Pancreas (tissue), 10 donors: ENCODE measurements at regions of chr2 and their contacts with region 1.

Region 1: DNA sequence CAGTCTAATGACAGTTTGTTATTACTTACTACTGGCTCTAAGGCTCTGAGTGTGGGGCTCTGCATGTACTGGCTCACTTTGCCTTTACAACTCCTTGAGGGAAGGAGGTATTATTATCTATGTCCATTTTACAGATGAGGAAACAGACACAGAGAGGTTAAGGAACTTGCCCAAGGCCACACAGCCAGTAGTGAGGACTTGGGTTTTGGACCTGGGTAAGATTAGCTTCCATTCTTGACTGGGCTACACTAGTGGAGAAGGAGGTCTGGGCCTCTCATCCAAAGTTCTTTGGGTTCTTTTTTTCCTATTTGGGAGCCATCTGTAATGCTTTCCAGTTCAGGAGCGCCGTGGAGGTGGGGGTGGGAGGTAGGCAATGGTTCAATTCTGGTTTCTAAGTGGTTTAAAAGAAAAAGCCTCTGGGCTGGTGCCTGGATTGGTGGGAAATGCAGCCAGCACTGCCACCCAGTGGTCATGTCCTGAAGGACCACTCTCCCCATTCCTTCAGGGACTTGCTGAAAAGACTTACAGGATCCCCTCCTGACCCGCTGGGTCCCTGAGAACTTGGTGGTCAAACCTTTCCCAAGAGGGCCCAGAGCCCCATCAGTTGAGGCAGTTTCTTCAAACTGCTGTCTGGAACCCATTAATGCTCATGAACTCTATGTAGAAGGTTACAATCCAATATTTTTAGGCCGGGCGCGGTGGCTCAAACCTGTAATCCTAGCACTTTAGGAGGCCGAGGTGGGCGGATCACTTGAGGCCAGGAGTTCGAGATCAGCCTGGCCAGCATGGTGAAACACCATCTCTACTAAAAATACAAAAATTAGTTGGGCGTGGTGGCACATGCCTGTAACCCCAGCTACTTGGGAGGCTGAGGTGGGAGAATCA is 38.6 kb upstream of the NOTO start:
- DNase-seq: peak; percentile 30 to 77 (median 67)
- ATAC-seq: peak; percentile 82 to 99 (median 91)
- H3K4me3 ChIP-seq: no peak overlapping the region
- H3K27ac ChIP-seq: no peak overlapping the region
- H3K4me1 ChIP-seq: no peaks in the 10 kb centered on the region
- H3K27me3 ChIP-seq: no peaks in the 10 kb centered on the region
- CTCF ChIP-seq: peak; percentile 77 to 86 (median 80)

Region 2: GRCh38 chr2:72892506-72893173 is 271.1 kb before region 1 on chr2:
- intact Hi-C with region 1: loop called in 1 of 3 experiments (anchors 10 kb)
- DNase-seq: peak; percentile 64 to 92 (median 81)
- ATAC-seq: peak; percentile 69 to 89 (median 81)
- H3K4me3 ChIP-seq: no peak overlapping the region
- H3K27ac ChIP-seq: no peak overlapping the region
- H3K4me1 ChIP-seq: peaks cover 7 to 18% (median 10%) of the 10 kb centered on the region in 3 donors
- H3K27me3 ChIP-seq: no peaks in the 10 kb centered on the region
- CTCF ChIP-seq: peak; percentile 45 to 70 (median 70)

Region 3: GRCh38 chr2:72993147-72993932 is 170.4 kb before region 1 on chr2:
- intact Hi-C with region 1: loop called in 2 of 3 experiments (anchors 5 kb)
- DNase-seq: peak in 1 of 6 donors; percentile 42
- ATAC-seq: peak in 3 of 4 donors; percentile 53 to 70 (median 63)
- H3K4me3 ChIP-seq: no peak overlapping the region
- H3K27ac ChIP-seq: no peak overlapping the region
- H3K4me1 ChIP-seq: no peaks in the 10 kb centered on the region
- H3K27me3 ChIP-seq: no peaks in the 10 kb centered on the region
- CTCF ChIP-seq: peak; percentile 69 to 85 (median 82)

Region 4: GRCh38 chr2:73080711-73081131 is 83.0 kb before region 1 on chr2:
- intact Hi-C with region 1: loop called in 2 of 3 experiments (anchors 5 kb)
- DNase-seq: no peak
- ATAC-seq: no peak
- H3K4me3 ChIP-seq: no peak overlapping the region
- H3K27ac ChIP-seq: no peak overlapping the region
- H3K4me1 ChIP-seq: no peaks in the 10 kb centered on the region
- H3K27me3 ChIP-seq: no peaks in the 10 kb centered on the region
- CTCF ChIP-seq: no peak